ENCODE measurements at regions of chr1 and their contacts with region 1.

Region 1: DNA sequence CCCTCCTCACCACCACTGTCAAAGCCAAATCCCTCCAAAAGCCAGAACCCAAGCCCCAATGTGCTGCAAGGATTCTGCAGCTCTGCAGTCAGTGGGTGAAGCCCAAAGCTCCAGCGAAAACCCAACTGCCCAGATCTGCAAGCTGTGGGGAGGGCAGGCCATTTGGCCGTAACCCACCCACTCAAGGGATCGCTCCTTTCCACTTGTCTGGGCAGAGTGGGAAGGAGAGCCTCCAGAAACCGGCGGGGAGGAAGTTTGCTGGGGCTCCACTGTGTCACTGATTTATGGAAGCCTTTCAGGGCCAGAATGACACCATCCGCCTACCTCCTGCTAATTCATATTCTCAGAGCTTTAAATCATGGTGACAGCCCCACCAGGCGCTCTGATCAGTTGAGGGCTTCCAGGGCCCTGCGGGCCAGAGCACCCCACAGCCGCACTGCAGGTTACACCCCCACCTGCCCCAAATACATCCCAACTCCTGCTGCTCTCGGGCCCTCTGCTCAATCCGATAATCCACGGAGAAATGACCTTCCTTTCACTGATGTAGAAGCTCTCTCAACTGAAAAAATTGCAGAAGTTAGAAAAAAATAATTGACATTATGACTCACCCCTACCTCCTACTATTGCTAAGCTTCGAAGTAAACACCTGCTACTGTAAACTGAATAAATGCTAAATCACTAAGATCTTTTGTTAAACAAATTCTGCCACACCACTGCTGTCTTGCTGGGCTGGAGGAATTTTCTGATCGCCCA is 40.6 kb upstream of the RAB4A start:
- DNase-seq: peak in 1 of 2 donors; percentile 45
- H3K4me3 ChIP-seq: no peak overlapping the region
- CTCF ChIP-seq: no peak
- POLR2A ChIP-seq: no peak

Region 2: GRCh38 chr1:231232870-231233734 is 2002.8 kb after region 1 on chr1:
- intact Hi-C with region 1: loop called (anchors 10 kb)
- DNase-seq: no peak
- H3K4me3 ChIP-seq: no peak overlapping the region
- CTCF ChIP-seq: no peak
- POLR2A ChIP-seq: no peak

Measured in lower leg skin (tissue), 4 donors.